ENCODE measurements at regions of chr12 and their contacts with region 1.

Region 1: DNA sequence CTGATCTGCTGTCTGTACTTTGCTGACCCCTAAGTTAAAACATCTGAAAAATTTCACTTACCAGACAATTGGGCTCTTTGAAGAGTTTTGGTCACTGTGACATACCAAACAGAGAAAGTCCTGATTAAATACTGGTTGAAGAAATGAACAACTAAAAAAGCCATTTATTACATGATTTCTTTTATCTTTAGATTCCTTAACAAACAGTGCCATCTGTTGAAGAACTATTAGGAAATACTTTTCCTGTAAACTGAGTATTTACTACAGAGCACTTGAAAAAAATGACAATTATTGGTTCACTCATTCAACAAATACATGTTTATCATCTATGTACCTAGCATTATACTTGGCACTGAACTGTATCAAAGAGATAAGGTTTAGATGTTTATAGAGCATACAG is 6.5 kb upstream of the WASHC4 start:
- DNase-seq: no peak
- H3K4me3 ChIP-seq: no peak overlapping the region
- H3K27ac ChIP-seq: no peak overlapping the region
- H3K4me1 ChIP-seq: peaks cover 5% of the 10 kb centered on the region
- H3K27me3 ChIP-seq: no peaks in the 10 kb centered on the region
- CTCF ChIP-seq: no peak

Region 2: GRCh38 chr12:105270671-105271255 is 169.8 kb after region 1 on chr12:
- CTCF ChIA-PET with region 1: interaction called, 10 read pairs
- dilution Hi-C with region 1: no loop called
- in situ Hi-C with region 1: no loop called
- intact Hi-C with region 1: no loop called
- DNase-seq: no peak
- H3K4me3 ChIP-seq: no peak overlapping the region
- H3K27ac ChIP-seq: no peak overlapping the region
- H3K4me1 ChIP-seq: peaks cover 11% of the 10 kb centered on the region
- H3K27me3 ChIP-seq: no peaks in the 10 kb centered on the region
- CTCF ChIP-seq: no peak